ENCODE measurements at regions of chr21 and their contacts with region 1.

Region 1: DNA sequence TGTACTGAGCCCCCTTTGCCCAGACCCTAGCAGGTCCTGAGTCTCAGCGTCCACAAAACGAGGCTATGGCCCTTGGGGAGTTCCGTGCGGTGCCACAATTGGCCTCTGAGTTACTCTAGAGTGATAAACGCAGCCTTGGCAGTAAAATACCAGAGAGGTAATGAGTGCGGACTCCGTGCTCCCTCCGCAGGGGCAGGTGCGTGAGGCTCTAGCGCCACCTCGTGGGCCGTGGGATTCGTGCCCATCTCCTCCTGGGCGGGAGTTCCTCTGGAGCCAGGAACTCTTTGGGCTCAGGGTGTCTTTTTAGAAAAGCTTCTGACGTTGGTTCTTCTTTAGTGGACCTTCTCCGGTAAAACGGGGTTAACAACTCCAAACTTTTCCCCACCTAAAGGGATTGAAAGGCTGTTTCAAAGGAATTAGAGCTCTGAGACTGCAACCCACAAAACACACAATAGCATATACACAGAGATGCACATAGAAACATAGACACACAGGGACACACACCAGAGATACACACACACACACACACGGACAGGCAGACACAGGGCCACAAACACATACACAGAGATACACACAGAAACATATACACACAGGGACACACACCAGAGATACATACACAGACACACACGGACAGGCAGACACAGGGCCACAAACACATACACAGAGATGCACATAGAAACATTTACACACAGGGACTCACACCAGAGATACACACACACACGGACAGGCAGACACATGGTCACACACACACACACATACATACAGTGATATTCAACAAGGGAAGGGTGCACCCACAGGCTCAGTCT is 99.4 kb downstream of the KCNJ15 start:
- DNase-seq: peak; percentile 27
- H3K4me3 ChIP-seq: no peak overlapping the region
- H3K27ac ChIP-seq: no peak overlapping the region
- H3K27me3 ChIP-seq: peaks cover 2% of the 10 kb centered on the region
- CTCF ChIP-seq: peak; percentile 100

Region 2: DNA sequence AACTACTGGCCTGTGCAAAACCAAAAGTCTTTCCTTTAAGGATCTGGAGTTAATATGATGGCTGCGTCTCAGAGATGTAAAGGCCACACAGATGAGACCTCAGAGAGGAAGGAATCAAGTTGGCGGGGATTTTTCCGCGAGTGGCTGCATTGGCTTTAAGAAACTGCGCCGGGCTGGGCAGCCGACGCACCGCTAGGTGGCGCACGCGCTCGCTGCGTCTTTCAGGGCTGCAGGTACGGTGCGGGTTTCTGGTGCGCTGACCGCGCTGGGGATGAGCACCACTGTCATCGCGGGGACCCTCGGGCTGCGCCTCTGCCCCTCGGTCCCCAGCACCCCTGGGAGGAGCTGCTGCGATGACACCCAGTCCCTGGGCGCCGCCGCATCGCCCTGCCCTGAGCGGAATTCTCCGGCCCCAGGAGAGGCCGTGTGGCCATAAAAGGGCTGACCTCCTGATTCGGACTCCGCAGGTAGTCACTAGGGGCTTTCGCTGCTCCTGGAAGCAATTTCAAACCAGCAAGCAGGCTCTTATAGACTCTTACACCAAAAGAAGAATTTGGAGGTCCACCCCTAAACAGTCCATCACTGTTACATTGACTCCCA is 680.9 kb before region 1 on chr21:
- CTCF ChIA-PET with region 1: interaction called, 24 read pairs
- POLR2A ChIA-PET with region 1: no interaction called
- DNase-seq: no peak
- H3K4me3 ChIP-seq: no peak overlapping the region
- H3K27ac ChIP-seq: no peak overlapping the region
- H3K27me3 ChIP-seq: peaks cover 18% of the 10 kb centered on the region
- CTCF ChIP-seq: peak; percentile 90

Region 3: DNA sequence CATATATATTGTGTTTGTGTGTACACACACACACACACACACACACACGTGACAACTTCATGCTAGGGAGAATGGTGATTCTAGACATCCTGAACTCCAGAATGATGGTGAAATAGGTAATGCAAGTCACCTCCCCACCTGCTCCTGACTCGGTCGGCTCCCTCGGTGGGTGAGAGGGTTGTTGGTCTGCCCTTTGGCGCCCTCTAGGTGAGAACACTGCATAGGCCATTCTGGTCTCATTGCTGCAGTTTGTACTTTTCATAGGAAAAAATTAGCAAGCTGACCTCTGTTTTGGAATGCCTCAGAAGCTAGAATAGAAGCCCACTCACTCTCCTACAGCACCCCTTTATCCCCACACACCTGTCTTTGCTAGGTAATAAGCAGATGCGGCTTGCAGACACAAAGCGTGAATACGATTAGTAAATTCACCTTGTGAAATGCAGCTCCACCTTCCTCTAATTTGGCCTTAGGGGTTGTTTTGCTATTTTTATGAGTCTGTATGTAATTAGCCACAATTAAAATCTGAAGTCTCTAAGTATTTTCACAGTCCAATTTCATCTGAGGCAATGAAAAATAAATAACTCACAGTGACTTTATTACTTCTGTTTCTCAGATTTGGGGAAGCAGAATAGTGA is 229.4 kb before region 1 on chr21:
- CTCF ChIA-PET with region 1: interaction called, 13 read pairs
- POLR2A ChIA-PET with region 1: no interaction called
- DNase-seq: no peak
- H3K4me3 ChIP-seq: no peak overlapping the region
- H3K27ac ChIP-seq: no peak overlapping the region
- H3K27me3 ChIP-seq: peaks cover 16% of the 10 kb centered on the region
- CTCF ChIP-seq: peak; percentile 85

Region 4: GRCh38 chr21:38170280-38170679 is 185.9 kb before region 1 on chr21:
- CTCF ChIA-PET with region 1: interaction called, 53 read pairs
- POLR2A ChIA-PET with region 1: interaction called, 4 read pairs
- DNase-seq: no peak
- H3K4me3 ChIP-seq: no peak overlapping the region
- H3K27ac ChIP-seq: no peak overlapping the region
- H3K27me3 ChIP-seq: no peaks in the 10 kb centered on the region
- CTCF ChIP-seq: peak; percentile 43; the same call in 1 of the 2 replicates

Region 5: DNA sequence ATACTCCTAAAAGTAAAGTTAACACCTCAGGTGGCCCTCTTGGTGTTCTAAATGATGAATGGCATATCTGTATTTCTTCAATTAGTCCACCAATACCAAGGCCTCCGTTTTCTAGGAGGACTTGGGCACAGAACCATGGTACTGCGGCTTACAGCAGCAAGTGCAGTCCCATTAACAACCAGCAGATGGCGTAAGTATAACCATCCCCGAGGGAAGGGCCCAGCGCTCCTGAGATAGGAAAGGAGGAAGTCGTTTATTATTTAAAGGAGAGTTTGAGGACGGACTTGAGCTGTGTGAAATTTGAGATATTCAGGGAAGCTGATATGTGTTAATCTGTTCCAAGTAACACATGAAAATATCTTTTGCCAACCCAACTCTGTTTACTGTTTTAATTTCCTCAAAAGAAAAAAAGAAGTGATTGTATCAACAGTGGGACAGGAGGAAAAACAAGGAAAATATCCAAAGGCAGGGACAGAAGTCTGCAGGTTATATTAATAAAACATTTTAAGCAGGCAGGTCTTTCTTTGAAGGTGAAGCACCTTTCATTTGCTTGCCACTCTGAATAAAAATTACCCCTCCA is 137.1 kb before region 1 on chr21:
- CTCF ChIA-PET with region 1: interaction called, 353 read pairs
- POLR2A ChIA-PET with region 1: no interaction called
- DNase-seq: peak; percentile 58
- H3K4me3 ChIP-seq: no peak overlapping the region
- H3K27ac ChIP-seq: no peak overlapping the region
- H3K27me3 ChIP-seq: no peaks in the 10 kb centered on the region
- CTCF ChIP-seq: peak; percentile 98

Region 6: DNA sequence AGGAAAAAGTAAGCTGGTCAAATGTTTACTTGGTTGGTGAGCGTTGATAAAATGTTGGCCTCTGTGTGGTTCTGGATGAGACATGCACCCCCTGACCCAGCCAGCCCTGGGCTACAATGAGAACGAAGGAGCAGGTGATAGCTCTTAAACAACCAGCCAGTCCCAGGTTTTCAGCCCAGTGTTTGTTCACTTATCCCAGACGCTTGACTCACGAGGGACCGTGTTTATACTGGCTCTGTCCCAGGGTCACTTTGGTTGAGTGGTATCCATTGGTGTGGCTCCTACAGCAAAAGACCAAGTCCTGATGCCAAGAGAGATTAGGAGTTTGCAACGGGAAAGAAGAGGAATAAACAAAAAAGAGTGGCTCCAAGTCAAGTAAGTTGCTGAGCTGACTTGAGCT is 12.5 kb before region 1 on chr21:
- CTCF ChIA-PET with region 1: interaction called, 18 read pairs
- POLR2A ChIA-PET with region 1: no interaction called
- DNase-seq: no peak
- H3K4me3 ChIP-seq: no peak overlapping the region
- H3K27ac ChIP-seq: no peak overlapping the region
- H3K27me3 ChIP-seq: no peaks in the 10 kb centered on the region
- CTCF ChIP-seq: no peak

Measured in AG04450 (cell line).